ENCODE measurements at regions of chrX and their contacts with region 1.

Region 1: GRCh38 chrX:107826238-107827029 is 768 bp downstream of the MID2 start:
- DNase-seq: peak; percentile 25
- ATAC-seq: peak; percentile 73
- H3K4me3 Mint-ChIP-seq: peak overlapping the region; percentile 74
- H3K27ac Mint-ChIP-seq: no peak overlapping the region
- H3K4me1 Mint-ChIP-seq: peaks cover 14% of the 10 kb centered on the region
- H3K27me3 Mint-ChIP-seq: peaks cover 24% of the 10 kb centered on the region
- CTCF ChIP-seq: no peak

Region 2: GRCh38 chrX:107537815-107538214 is 288.6 kb before region 1 on chrX:
- CTCF ChIA-PET with region 1: interaction called, 3 read pairs
- POLR2A ChIA-PET with region 1: interaction called, 11 read pairs
- intact Hi-C with region 1: no loop called
- DNase-seq: no peak
- ATAC-seq: no peak
- H3K4me3 Mint-ChIP-seq: no peak overlapping the region
- H3K27ac Mint-ChIP-seq: no peak overlapping the region
- H3K4me1 Mint-ChIP-seq: peaks cover 5% of the 10 kb centered on the region
- H3K27me3 Mint-ChIP-seq: no peaks in the 10 kb centered on the region
- CTCF ChIP-seq: no peak

Region 3: DNA sequence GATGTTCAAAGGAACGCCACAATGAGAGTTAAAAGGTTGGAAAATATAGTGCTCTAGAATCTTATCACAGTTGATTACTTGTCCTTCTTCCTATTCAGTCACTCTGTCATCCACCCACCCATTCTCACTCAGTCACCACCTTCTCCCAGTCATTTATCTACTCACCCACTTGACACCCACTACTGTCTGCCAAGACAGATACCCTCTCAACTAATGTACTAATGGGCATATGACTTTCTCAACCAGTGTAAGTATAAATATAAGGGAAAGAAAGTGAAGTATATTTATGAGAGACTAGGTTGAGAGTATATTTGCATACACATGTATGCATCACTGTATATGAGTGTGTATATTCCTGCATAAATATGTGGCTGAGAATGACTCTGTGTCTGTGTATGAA is 19.2 kb after region 1 on chrX:
- CTCF ChIA-PET with region 1: no interaction called
- POLR2A ChIA-PET with region 1: no interaction called
- intact Hi-C with region 1: no loop called
- DNase-seq: no peak
- ATAC-seq: no peak
- H3K4me3 Mint-ChIP-seq: no peak overlapping the region
- H3K27ac Mint-ChIP-seq: no peak overlapping the region
- H3K4me1 Mint-ChIP-seq: no peaks in the 10 kb centered on the region
- H3K27me3 Mint-ChIP-seq: no peaks in the 10 kb centered on the region
- CTCF ChIP-seq: no peak